HEK293 (cell line): ENCODE measurements at regions of chr4 and their contacts with region 1.

Region 1: DNA sequence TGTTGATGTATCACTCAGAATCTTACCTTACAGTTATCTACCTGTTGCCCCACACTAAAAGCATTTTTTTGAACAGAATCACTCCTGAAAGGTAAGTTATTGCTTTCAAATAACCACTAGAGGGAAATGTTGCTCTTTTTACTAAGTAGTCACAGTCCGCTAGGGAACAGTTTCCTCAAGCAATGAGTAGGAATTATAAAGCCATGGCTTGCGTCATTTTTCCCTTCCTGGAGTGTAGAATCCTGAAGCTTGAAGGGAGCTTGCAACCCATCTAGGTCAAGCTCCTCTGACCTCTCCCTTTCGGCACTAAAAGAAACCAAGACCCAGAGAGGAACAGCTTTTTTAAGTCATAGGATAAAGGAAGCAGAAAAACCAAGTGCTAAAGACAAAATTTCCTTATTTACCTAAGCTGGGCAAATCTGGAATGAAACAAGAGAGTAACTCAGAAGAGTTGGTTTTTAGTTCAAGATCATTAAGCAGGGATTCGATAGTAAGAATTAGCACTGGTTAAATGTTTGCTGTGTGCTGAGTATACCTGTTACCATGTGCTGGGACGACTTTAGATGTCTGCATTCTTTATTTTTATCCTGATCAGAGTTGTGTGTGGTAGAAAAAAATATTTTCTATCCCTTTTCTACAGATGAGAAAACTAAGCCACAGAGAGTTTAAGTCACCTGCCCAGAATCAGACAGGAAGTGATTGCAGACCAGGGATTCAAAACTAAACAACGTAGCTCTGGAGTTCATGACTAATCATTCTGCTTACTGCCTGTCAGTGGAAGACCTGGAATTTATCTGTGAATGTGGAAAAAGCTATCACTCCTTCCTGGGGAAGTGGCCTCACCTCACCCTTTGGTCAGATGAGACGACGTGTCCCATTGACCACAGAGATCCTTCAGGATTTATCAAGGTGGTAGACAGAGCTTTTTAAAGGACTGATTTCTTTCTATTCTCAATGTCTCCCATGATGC is 631.5 kb downstream of the RAB28 start:
- H3K4me3 ChIP-seq: no peak overlapping the region
- H3K27ac ChIP-seq: no peak overlapping the region
- H3K4me1 ChIP-seq: no peaks in the 10 kb centered on the region
- CTCF ChIP-seq: peak; percentile 25; the same call in 1 of the 2 replicates

Region 2: GRCh38 chr4:13547485-13548041 is 694.9 kb after region 1 on chr4:
- CTCF ChIA-PET with region 1: interaction called, 10 read pairs
- POLR2A ChIA-PET with region 1: no interaction called
- H3K4me3 ChIP-seq: peak overlapping the region; percentile 37
- H3K27ac ChIP-seq: no peak overlapping the region; the same call in 1 of the 2 replicates
- H3K4me1 ChIP-seq: no peaks in the 10 kb centered on the region
- CTCF ChIP-seq: no peak